PC-3 (cell line): ENCODE measurements at regions of chr5 and their contacts with region 1.

Region 1: GRCh38 chr5:123813937-123814624 is 302.1 kb downstream of the CSNK1G3 start:
- DNase-seq: peak; percentile 34
- ATAC-seq: peak; percentile 96
- H3K4me3 ChIP-seq: peak overlapping the region; percentile 35; the same call in 1 of the 2 replicates
- H3K27ac ChIP-seq: 0 out of 2 replicates have a peak overlapping the region, but pooled peaks have one; percentile 16
- H3K4me1 ChIP-seq: peaks cover 18% of the 10 kb centered on the region
- H3K27me3 ChIP-seq: no peaks in the 10 kb centered on the region
- CTCF ChIP-seq: no peak

Region 2: DNA sequence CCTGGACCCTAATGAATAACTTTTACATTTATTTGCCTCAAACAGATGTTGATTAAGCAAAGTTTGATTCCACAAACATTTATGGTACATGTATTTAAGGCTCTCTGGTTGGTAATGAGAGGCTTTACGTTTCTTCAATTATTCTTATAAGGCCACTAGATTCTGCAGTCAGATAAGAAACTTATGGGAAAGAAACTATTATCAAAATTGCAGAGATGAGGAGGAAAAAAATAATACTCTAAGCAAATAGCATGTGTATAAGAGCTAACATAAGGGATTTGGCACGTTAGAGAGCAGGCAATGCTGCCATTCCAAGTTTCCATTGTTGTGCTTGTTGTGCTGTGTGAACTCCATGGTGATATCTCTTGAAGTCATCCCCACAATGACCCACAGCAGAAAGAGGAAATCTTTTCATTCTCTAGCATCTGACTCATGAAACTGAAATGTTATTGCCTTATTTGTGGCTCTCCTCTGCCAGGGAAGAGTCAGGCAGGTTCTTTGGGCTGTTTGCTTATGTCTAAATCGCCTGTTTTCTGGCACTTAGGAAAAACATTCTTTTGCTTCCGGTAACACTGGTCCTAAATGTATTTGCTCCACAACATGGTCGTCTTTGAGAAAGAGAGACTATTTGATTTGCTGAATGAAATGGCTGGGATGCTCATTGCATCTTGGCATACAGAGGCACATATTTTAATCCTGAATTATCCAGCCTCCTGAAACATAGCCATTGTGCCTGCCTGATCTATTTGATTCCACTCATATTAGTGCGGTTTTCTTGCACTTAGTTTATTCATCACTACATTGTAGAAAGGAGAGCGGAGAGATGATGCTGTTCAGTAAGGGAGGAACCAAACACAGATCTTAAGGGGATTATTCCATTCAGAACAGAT is 113.4 kb before region 1 on chr5:
- CTCF ChIA-PET with region 1: no interaction called
- POLR2A ChIA-PET with region 1: no interaction called
- intact Hi-C with region 1: loop called (anchors 10 kb)
- DNase-seq: peak; percentile 84
- ATAC-seq: peak; percentile 96
- H3K4me3 ChIP-seq: no peak overlapping the region
- H3K27ac ChIP-seq: peak overlapping the region; percentile 73
- H3K4me1 ChIP-seq: peaks cover 19% of the 10 kb centered on the region
- H3K27me3 ChIP-seq: no peaks in the 10 kb centered on the region
- CTCF ChIP-seq: no peak

Region 3: GRCh38 chr5:123827811-123828210 is 13.7 kb after region 1 on chr5:
- CTCF ChIA-PET with region 1: no interaction called
- POLR2A ChIA-PET with region 1: no interaction called
- intact Hi-C with region 1: no loop called
- DNase-seq: no peak
- ATAC-seq: no peak
- H3K4me3 ChIP-seq: no peak overlapping the region
- H3K27ac ChIP-seq: no peak overlapping the region
- H3K4me1 ChIP-seq: no peaks in the 10 kb centered on the region
- H3K27me3 ChIP-seq: no peaks in the 10 kb centered on the region
- CTCF ChIP-seq: no peak